B cell (primary cell): ENCODE measurements at regions of chr19 and their contacts with region 1.

Region 1: GRCh38 chr19:45125926-45126493 is 33.0 kb downstream of the PPP1R37 start:
- DNase-seq: peak; percentile 71
- ATAC-seq: peak; percentile 78
- H3K4me3 ChIP-seq: no peak overlapping the region
- H3K4me3 Mint-ChIP-seq: no peak overlapping the region
- H3K27ac ChIP-seq: no peak overlapping the region
- H3K27ac Mint-ChIP-seq: no peak overlapping the region
- H3K4me1 ChIP-seq: peaks cover 16 to 26% of the 10 kb centered on the region in 2 donors
- H3K4me1 Mint-ChIP-seq: peaks cover 43% of the 10 kb centered on the region
- H3K27me3 ChIP-seq: no peaks in the 10 kb centered on the region
- H3K27me3 Mint-ChIP-seq: no peaks in the 10 kb centered on the region
- CTCF ChIP-seq: peak; percentile 76

Region 2: GRCh38 chr19:44176590-44176989 is 949.4 kb before region 1 on chr19:
- CTCF ChIA-PET with region 1: no interaction called
- POLR2A ChIA-PET with region 1: no interaction called
- intact Hi-C with region 1: no loop called
- DNase-seq: no peak
- ATAC-seq: no peak
- H3K4me3 ChIP-seq: no peak overlapping the region
- H3K4me3 Mint-ChIP-seq: no peak overlapping the region
- H3K27ac ChIP-seq: no peak overlapping the region
- H3K27ac Mint-ChIP-seq: no peak overlapping the region
- H3K4me1 ChIP-seq: no peaks in the 10 kb centered on the region
- H3K4me1 Mint-ChIP-seq: no peaks in the 10 kb centered on the region
- H3K27me3 ChIP-seq: no peaks in the 10 kb centered on the region
- H3K27me3 Mint-ChIP-seq: no peaks in the 10 kb centered on the region
- CTCF ChIP-seq: no peak

Region 3: DNA sequence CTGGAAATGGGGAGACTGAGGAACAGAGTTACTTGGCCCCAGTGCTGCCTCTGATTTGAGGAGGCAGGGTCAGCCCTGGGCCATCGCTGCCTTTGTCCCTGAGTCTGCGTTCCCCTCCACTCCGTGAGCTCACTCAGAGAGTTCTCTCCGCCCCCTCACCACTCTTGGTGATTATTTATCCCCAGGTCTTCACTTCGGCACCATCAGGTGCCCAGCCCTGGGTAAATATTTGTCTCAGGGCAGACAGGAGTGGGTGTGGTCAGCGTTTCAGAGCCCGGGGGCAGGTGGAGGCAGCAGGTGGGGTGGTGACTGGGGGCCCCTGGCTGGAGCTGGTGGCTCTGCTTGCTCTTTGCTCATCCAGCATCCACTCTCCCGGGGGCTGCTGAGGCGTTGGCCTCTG is 12.4 kb before region 1 on chr19:
- CTCF ChIA-PET with region 1: interaction called, 14 read pairs
- POLR2A ChIA-PET with region 1: no interaction called
- intact Hi-C with region 1: no loop called
- DNase-seq: no peak
- ATAC-seq: no peak
- H3K4me3 ChIP-seq: no peak overlapping the region
- H3K4me3 Mint-ChIP-seq: no peak overlapping the region
- H3K27ac ChIP-seq: no peak overlapping the region
- H3K27ac Mint-ChIP-seq: no peak overlapping the region
- H3K4me1 ChIP-seq: peaks cover 28 to 54% of the 10 kb centered on the region in 2 donors
- H3K4me1 Mint-ChIP-seq: peaks cover 66% of the 10 kb centered on the region
- H3K27me3 ChIP-seq: no peaks in the 10 kb centered on the region
- H3K27me3 Mint-ChIP-seq: no peaks in the 10 kb centered on the region
- CTCF ChIP-seq: no peak

Region 4: GRCh38 chr19:45405435-45406225 is 279.6 kb after region 1 on chr19:
- CTCF ChIA-PET with region 1: no interaction called
- POLR2A ChIA-PET with region 1: no interaction called
- intact Hi-C with region 1: no loop called
- DNase-seq: peak; percentile 89
- ATAC-seq: peak; percentile 66
- H3K4me3 ChIP-seq: peak overlapping the region; percentile 72 to 97 (median 80)
- H3K4me3 Mint-ChIP-seq: peak overlapping the region; percentile 93
- H3K27ac ChIP-seq: peak overlapping the region; percentile 81 to 92
- H3K27ac Mint-ChIP-seq: peak overlapping the region; percentile 92
- H3K4me1 ChIP-seq: peaks cover 34 to 43% of the 10 kb centered on the region in 2 donors
- H3K4me1 Mint-ChIP-seq: peaks cover 46% of the 10 kb centered on the region
- H3K27me3 ChIP-seq: peaks cover 0 to 30% (median 17%) of the 10 kb centered on the region in 4 experiments
- H3K27me3 Mint-ChIP-seq: peaks cover 13% of the 10 kb centered on the region
- CTCF ChIP-seq: no peak